ENCODE measurements at regions of chr4 and their contacts with region 1.

Region 1: GRCh38 chr4:4406455-4407298 is 19.8 kb downstream of the NSG1 start:
- DNase-seq: peak; percentile 90
- H3K4me3 ChIP-seq: no peak overlapping the region
- H3K27ac ChIP-seq: peak overlapping the region in 1 of 2 experiments; percentile 94; a peak in 2 of 4 replicates
- H3K4me1 ChIP-seq: peaks cover 0 to 30% of the 10 kb centered on the region in 2 experiments; a peak in 2 of 4 replicates
- H3K27me3 ChIP-seq: no peaks in the 10 kb centered on the region
- CTCF ChIP-seq: no peak
- EP300 ChIP-seq: peak in 1 of 2 experiments; percentile 50; a peak in 2 of 4 replicates
- RAD21 ChIP-seq: no peak; the same call in 1 of the 2 replicates

Region 2: GRCh38 chr4:4356106-4357041 is 50.3 kb before region 1 on chr4:
- CTCF ChIA-PET with region 1: no interaction called
- POLR2A ChIA-PET with region 1: no interaction called
- DNase-seq: no peak
- H3K4me3 ChIP-seq: no peak overlapping the region
- H3K27ac ChIP-seq: no peak overlapping the region
- H3K4me1 ChIP-seq: no peaks in the 10 kb centered on the region
- H3K27me3 ChIP-seq: peaks cover 5% of the 10 kb centered on the region; the same call in 1 of the 2 replicates
- CTCF ChIP-seq: no peak
- EP300 ChIP-seq: no peak
- RAD21 ChIP-seq: no peak

Region 3: DNA sequence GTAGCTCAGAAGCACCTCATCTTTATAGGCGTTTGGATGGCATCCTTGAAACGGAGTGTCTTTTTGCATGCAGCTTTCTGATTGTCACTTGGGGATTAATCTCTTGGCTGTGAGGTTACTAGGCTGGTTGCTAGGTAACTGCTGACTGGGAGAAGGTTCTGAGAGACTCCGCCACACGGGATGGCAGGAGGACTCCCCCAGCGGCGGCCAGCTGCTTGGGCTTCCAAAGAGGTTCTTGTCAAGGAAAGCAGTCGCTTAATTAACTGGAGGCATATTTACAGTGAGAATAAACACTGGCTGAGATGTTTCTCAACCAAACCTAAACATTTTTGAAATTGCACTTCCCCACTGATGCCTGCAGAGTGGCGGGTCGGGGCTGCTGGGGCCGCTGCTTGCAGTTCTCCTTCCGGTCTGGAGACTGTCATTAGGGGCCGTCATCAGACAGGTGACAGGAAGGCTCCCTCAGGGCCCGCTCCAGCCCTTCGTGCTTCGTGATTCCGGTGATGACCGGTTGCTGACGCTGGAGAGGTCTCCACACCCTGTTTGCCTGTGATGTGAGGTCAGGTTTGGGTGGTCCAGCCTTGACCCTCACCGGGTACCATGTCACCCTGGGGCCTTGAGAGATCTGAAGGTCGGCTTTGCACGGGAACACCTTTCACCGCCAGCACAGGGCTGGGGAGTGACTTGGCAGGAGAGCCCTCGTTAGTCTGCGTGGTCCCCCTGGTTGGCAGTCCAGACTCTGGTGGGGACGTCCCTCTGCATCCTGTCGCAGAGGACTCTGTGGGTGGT is 10.6 kb before region 1 on chr4:
- CTCF ChIA-PET with region 1: interaction called, 10 read pairs
- POLR2A ChIA-PET with region 1: interaction called, 7 read pairs
- DNase-seq: peak; percentile 61
- H3K4me3 ChIP-seq: no peak overlapping the region
- H3K27ac ChIP-seq: no peak overlapping the region
- H3K4me1 ChIP-seq: peaks cover 28 to 34% of the 10 kb centered on the region in 2 experiments
- H3K27me3 ChIP-seq: no peaks in the 10 kb centered on the region
- CTCF ChIP-seq: no peak
- EP300 ChIP-seq: no peak
- RAD21 ChIP-seq: no peak